ENCODE measurements at regions of chr6 and their contacts with region 1.

Region 1: DNA sequence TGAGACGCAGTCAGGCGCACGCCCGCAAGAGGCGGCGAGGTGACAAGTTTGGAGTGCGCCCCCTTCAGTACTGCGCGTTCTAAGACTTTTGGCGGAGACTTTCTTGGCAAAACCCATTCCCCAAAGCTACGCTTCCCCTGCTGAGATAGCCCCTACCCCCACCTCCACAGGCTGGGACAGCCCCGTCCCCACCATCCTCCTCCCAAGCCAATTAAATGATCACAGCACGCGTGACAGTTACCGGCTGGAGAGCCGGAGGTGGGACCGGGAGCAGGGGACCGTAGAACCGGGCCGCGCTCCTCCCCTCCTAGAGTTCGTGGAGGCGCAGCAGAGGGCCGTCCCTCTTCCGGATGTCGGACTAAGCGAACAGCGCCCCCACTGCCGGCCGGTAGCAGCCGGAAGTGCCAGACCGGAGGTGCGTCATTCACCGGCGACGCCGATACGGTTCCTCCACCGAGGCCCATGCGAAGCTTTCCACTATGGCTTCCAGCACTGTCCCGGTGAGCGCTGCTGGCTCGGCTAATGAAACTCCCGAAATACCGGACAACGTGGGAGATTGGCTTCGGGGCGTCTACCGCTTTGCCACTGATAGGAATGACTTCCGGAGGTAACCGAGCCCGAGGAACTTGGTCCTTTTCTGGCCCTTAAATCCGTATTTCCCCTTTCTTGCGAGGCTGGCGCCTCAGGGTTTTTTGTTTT is at the start of gene TOMM6:
- DNase-seq: peak; percentile 47
- H3K4me3 ChIP-seq: peak within 1 kb of the TSS; percentile 99
- CTCF ChIP-seq: peak; percentile 94

Region 2: GRCh38 chr6:41182069-41183034 is 605.0 kb before region 1 on chr6:
- CTCF ChIA-PET with region 1: no interaction called
- POLR2A ChIA-PET with region 1: no interaction called
- DNase-seq: peak; percentile 28
- H3K4me3 ChIP-seq: no peak overlapping the region
- CTCF ChIP-seq: peak; percentile 72

Region 3: DNA sequence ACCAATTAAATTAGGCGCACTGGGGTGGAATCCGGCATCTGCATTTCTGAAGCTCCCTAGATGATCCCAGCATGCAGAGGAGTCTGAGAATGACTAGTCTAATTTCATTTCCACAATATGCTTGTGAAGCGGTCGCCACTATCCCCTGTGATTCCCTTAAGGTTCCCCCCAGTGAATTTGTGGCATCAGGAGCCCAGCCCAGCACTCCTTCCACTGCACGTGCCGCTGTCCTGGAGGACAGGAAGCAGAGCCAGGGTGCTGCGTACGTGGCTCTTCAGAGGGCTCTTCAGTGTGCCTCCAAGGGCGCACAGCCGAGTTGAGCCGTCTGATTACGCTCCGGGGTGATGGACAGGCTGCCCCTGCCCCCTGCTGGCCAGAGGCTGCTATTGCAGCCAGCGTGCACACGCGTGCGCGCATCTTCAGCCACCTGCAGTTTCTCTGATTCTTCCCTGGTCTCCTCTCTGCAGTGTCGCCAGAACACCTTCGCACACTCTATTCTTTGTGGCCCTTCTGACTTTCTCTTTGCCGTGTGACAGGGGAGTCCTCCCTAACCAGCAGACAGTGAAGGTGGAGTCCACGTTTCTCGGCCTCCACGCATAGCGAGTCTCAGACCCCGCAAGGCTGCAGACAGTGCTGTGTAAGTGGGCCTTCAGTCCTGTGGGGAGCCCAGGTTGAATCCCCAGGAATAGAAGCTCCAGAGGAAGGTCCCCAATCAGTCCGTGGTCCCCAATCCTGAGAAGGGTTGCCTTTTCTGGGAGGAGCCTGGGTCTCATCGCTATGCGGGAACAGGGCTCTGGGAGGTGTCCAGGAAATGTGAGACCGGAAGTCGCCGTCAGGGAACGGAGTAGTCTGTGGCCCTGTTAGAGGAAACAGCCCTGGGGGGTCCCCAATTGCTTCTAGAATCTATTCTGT is 468.5 kb before region 1 on chr6:
- CTCF ChIA-PET with region 1: no interaction called
- POLR2A ChIA-PET with region 1: no interaction called
- DNase-seq: peak; percentile 17
- H3K4me3 ChIP-seq: peak overlapping the region; percentile 51
- CTCF ChIP-seq: peak; percentile 99

Region 4: DNA sequence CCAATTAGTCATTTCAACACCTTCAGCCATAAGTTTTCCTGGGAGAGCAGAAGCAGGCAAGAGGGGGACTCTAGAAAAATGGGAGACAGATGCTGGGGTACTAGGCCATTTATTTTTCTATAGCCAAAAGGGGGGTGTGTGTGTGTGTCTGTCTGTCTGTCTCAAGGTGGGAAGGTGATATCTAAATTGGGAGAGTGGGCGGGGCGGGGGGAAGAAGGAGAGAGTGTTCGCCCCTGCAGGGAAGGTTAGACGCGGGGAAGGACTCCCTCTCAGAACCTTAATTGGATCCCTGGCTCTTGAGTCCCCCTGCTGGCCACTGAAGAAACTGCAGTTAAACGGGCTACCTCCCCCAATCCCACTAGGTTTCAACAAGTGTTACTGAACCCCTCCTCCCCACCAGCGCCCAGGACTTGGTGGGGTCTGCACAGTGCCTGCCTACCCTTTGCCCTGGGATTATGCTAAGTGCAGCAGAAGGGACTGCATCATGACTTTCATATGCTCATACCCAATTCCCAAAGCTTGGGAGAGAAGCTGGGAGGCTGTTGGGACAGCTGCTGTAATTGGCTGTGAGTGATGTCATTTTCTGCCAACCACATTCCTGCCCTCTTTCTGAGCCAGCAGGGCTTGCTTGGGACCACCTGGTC is 195.4 kb before region 1 on chr6:
- CTCF ChIA-PET with region 1: interaction called, 67 read pairs
- POLR2A ChIA-PET with region 1: no interaction called
- DNase-seq: no peak
- H3K4me3 ChIP-seq: no peak overlapping the region
- CTCF ChIP-seq: peak; percentile 86

Region 5: GRCh38 chr6:41705996-41706835 is 81.2 kb before region 1 on chr6:
- CTCF ChIA-PET with region 1: interaction called, 14 read pairs
- POLR2A ChIA-PET with region 1: no interaction called
- DNase-seq: no peak
- H3K4me3 ChIP-seq: no peak overlapping the region
- CTCF ChIP-seq: peak; percentile 76

Region 6: DNA sequence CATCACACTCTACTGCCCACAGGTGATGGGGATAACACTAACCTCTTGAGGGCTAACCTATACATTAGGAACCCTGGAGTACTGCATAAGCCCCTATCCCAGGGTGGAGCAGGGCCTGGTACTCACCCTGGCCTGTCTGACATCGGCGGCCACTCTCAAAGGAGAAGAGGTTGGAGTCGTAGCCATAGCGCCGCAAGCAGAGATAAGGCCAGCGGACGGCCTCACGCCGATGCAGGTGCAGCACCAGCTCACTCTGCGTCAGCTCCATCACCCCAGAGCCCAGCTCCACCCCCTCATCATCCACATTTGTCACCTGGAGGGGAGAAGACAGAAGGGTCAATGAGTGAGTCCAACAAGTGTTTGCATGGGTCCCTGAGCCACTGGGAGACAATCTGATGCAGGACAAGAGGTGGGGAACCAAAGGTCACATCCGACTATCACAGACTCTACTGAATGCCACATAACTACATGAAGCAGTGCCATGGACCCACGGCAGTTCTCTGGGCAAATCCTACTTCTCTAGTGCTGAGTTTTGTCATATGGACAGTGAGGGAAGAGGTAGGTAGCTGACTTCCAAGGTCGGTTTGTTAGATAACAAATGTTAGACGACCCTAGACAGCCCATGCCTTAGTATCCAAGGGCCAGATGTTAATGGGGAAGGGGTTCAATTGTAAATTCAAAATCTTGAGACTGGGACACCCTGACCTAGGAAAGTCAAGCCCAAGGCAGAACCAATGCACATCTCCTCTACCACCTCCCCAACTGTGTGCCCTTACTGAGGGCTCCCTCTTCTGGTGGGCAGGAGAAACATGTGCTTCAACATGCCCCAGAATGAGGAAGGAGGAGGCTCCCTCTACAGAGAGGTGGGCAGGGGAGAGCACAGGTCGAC is 11.8 kb before region 1 on chr6:
- CTCF ChIA-PET with region 1: interaction called, 70 read pairs
- POLR2A ChIA-PET with region 1: interaction called, 3 read pairs
- DNase-seq: no peak
- H3K4me3 ChIP-seq: no peak overlapping the region
- CTCF ChIP-seq: peak; percentile 89

Region 7: GRCh38 chr6:41824571-41825569 is 37.5 kb after region 1 on chr6:
- CTCF ChIA-PET with region 1: interaction called, 46 read pairs
- POLR2A ChIA-PET with region 1: no interaction called
- DNase-seq: no peak
- H3K4me3 ChIP-seq: no peak overlapping the region
- CTCF ChIP-seq: no peak

Region 8: GRCh38 chr6:41929924-41930323 is 142.6 kb after region 1 on chr6:
- CTCF ChIA-PET with region 1: interaction called, 96 read pairs
- POLR2A ChIA-PET with region 1: no interaction called
- DNase-seq: no peak
- H3K4me3 ChIP-seq: no peak overlapping the region
- CTCF ChIP-seq: no peak

Region 9: GRCh38 chr6:42050266-42051032 is 263.1 kb after region 1 on chr6 and contains the start of gene TAF8:
- CTCF ChIA-PET with region 1: interaction called, 514 read pairs
- POLR2A ChIA-PET with region 1: interaction called, 9 read pairs
- DNase-seq: peak; percentile 59
- H3K4me3 ChIP-seq: peak within 1 kb of the TSS; percentile 81
- CTCF ChIP-seq: no peak

Measured in AG04449 (cell line).